Endothelial cell of umbilical vein (primary cell): ENCODE measurements at regions of chr1 and their contacts with region 1.

Region 1: DNA sequence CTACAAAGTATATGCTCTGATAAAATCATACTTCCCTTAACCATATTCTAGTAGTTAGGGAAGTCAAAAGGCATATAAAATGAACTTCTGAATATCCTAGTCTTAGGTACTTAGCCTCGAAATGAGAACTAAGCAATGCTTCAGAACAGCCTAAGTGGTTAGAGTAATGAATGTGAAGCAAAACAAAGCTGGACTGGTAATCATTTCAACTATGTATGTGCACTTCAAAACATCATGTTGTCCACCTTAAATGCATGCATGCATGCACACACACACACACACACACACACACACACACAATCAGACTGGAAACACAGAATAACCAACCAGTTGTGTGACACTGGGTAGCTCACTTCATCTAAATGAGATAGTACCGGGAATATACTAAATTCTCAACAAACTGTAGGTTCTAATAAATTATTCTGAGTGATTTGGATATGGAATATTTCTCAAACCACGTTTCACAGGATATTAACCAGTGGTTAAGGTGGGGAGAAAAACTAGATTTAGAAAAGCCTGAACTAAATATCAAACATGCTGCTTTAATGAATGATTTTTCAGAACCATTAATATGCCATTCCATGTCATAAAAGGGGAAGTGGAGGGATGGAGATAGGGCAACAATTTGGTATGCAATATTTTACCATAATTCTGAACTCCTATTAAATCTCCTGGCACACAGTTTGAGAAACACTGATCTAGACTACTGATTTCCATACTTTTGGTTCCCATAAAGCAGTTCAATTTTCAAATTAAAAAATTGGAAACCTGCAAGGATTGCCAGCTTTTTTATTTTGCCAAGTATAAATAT is 19.5 kb downstream of the RNF115 start:
- DNase-seq: no peak
- H3K4me3 ChIP-seq: no peak overlapping the region
- H3K27ac ChIP-seq: no peak overlapping the region
- H3K4me1 ChIP-seq: no peaks in the 10 kb centered on the region
- H3K27me3 ChIP-seq: no peaks in the 10 kb centered on the region
- CTCF ChIP-seq: no peak
- POLR2A ChIP-seq: no peak

Region 2: DNA sequence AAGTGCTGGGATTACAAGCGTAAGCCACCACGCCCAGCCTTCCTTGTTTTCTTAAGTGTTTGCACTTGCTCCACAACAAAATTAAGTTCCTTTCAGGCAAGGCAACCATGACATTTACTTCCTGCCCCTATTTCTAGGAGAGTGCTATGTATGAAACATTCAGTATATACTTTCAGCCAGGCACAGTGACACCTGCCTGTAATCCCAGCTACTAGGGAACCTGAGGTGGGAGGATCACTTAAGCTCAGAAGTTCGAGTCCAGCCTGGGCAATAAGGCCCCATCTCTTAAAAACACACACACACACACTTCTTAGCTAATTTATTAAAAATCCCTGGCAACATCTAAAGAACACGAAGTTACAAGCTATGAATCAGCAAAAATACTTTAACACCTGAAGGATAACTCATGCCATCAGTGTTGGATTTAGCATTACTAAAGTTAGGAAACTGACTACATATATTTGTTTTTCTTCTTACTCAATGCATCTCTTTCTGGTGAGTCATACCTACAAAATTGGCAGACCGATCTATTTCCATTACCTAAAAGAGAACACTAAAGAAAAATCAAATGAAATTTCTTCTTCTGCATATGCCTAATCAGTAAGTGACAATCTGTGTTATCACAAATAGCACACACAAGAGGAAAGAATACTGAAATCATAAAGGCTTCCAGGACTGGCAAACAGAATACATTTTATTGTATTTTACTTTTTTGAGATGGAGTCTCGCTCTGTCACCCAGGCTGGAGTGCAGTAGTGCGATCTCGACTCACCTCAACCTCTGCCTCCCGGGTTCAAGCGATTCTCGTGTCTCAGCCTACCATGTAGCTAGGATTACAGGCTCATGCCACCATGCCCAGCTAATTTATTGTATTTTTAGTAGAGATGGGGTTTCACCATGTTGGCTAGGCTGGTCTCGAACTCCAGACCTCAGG is 22.0 kb before region 1 on chr1:
- CTCF ChIA-PET with region 1: interaction called, 13 read pairs
- POLR2A ChIA-PET with region 1: no interaction called
- dilution Hi-C with region 1: no loop called
- intact Hi-C with region 1: no loop called
- DNase-seq: peak; percentile 96
- H3K4me3 ChIP-seq: no peak overlapping the region
- H3K27ac ChIP-seq: peak overlapping the region; percentile 91
- H3K4me1 ChIP-seq: peaks cover 52% of the 10 kb centered on the region
- H3K27me3 ChIP-seq: no peaks in the 10 kb centered on the region
- CTCF ChIP-seq: no peak
- POLR2A ChIP-seq: no peak

Region 3: GRCh38 chr1:145792484-145792883 is 12.0 kb before region 1 on chr1:
- CTCF ChIA-PET with region 1: interaction called, 19 read pairs
- POLR2A ChIA-PET with region 1: interaction called, 3 read pairs
- dilution Hi-C with region 1: no loop called
- intact Hi-C with region 1: no loop called
- DNase-seq: no peak
- H3K4me3 ChIP-seq: no peak overlapping the region
- H3K27ac ChIP-seq: no peak overlapping the region
- H3K4me1 ChIP-seq: no peaks in the 10 kb centered on the region
- H3K27me3 ChIP-seq: no peaks in the 10 kb centered on the region
- CTCF ChIP-seq: no peak
- POLR2A ChIP-seq: no peak

Region 4: DNA sequence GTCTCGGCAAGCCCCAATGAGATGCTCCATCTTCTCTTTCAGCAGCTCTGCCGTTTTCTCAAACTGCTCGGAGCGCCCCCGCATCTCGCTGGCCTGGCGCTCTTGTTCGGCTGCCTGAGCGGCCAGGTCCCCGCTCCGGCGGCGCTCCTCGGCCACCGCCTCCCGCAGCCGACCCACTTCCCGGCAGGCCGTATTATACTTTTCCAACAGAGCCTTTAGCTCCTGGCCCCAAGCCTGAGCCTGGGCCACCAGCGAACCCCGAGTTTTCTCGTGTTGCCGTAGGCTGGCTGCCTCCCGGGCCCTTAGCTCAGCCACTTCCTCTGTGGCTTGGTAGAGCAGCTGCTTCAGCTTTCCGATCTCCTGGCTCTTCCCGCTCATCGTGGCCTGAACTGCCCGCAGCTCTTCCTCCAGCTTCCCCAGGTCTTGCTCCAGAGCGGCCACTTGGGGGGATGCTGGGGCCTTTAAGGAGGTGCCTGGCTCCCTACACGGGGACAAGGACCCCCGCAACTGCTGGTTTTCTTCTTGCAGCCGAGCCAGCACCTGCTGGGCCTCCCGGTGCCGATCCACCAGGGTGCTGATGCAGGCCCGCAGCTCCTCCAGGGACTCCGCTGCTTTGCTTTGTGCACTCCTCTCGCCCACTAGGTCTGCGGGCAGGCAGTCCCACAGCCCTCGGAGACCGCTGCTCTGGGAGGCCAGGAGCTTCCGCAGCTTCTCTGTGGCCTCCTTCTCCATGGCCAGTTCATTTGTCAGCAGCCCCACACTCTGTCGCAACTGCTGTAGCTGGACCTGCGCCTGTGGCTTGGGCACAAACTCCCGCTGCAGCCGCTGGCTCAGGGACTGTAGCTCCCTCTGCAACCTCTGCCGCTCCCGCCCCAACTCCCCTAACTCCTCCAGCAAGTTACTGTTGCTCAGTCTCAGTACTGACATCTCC is 67.8 kb after region 1 on chr1:
- CTCF ChIA-PET with region 1: no interaction called
- POLR2A ChIA-PET with region 1: no interaction called
- dilution Hi-C with region 1: no loop called
- intact Hi-C with region 1: no loop called
- DNase-seq: peak; percentile 37
- H3K4me3 ChIP-seq: peak overlapping the region in 1 of 3 experiments; percentile 35
- H3K27ac ChIP-seq: no peak overlapping the region
- H3K4me1 ChIP-seq: peaks cover 8% of the 10 kb centered on the region
- H3K27me3 ChIP-seq: peaks cover 0 to 3% of the 10 kb centered on the region in 2 experiments
- CTCF ChIP-seq: no peak
- POLR2A ChIP-seq: no peak